ENCODE measurements at regions of chr1 and their contacts with region 1.

Region 1: GRCh38 chr1:226541631-226542622 is 6.6 kb upstream of the STUM start:
- DNase-seq: no peak
- ATAC-seq: no peak
- H3K4me3 Mint-ChIP-seq: no peak overlapping the region
- H3K27ac Mint-ChIP-seq: no peak overlapping the region
- H3K4me1 Mint-ChIP-seq: peaks cover 4% of the 10 kb centered on the region
- H3K27me3 Mint-ChIP-seq: peaks cover 28% of the 10 kb centered on the region
- CTCF ChIP-seq: no peak

Region 2: DNA sequence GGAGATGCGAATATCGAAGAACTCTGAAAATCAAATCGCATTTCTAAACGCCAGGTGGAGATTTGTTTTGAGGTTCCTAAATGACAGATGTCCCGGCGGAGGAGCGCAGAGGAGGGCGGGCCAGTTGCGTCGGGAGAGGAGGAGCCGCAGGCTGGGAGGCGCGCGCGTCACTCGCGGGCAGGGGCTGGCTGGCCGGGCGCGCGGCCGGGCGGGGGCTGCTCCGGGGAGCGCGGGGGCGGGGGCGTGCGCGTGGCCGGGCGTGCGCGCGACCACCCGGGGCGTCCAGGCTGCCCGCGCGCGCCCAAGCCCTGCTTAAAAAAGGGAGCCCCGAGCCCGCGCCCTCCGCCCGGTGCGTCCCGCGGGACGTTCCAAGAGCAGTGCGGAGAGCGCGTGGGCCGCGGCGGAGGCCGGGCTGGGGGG is 432.1 kb before region 1 on chr1:
- CTCF ChIA-PET with region 1: no interaction called
- POLR2A ChIA-PET with region 1: interaction called, 12 read pairs
- DNase-seq: peak; percentile 83
- ATAC-seq: peak; percentile 77
- H3K4me3 Mint-ChIP-seq: peak overlapping the region; percentile 90
- H3K27ac Mint-ChIP-seq: peak overlapping the region; percentile 85
- H3K4me1 Mint-ChIP-seq: peaks cover 46% of the 10 kb centered on the region
- H3K27me3 Mint-ChIP-seq: peaks cover 20% of the 10 kb centered on the region
- CTCF ChIP-seq: no peak

Measured in WTC11 (cell line).